WTC11 (cell line): ENCODE measurements at regions of chr11 and their contacts with region 1.

Region 1: GRCh38 chr11:69683764-69684333 is 8.7 kb upstream of the LTO1 start:
- DNase-seq: peak; percentile 75
- ATAC-seq: peak; percentile 69
- H3K4me3 Mint-ChIP-seq: no peak overlapping the region
- H3K27ac Mint-ChIP-seq: no peak overlapping the region
- H3K4me1 Mint-ChIP-seq: peaks cover 5% of the 10 kb centered on the region
- H3K27me3 Mint-ChIP-seq: peaks cover 10% of the 10 kb centered on the region
- CTCF ChIP-seq: peak; percentile 59

Region 2: GRCh38 chr11:69662017-69662698 is 21.7 kb before region 1 on chr11:
- CTCF ChIA-PET with region 1: interaction called, 34 read pairs
- POLR2A ChIA-PET with region 1: interaction called, 3 read pairs
- DNase-seq: peak; percentile 26
- ATAC-seq: peak; percentile 49
- H3K4me3 Mint-ChIP-seq: no peak overlapping the region
- H3K27ac Mint-ChIP-seq: peak overlapping the region; percentile 17; the same call in 1 of the 2 replicates
- H3K4me1 Mint-ChIP-seq: peaks cover 19% of the 10 kb centered on the region
- H3K27me3 Mint-ChIP-seq: no peaks in the 10 kb centered on the region
- CTCF ChIP-seq: no peak; the same call in 1 of the 2 replicates

Region 3: DNA sequence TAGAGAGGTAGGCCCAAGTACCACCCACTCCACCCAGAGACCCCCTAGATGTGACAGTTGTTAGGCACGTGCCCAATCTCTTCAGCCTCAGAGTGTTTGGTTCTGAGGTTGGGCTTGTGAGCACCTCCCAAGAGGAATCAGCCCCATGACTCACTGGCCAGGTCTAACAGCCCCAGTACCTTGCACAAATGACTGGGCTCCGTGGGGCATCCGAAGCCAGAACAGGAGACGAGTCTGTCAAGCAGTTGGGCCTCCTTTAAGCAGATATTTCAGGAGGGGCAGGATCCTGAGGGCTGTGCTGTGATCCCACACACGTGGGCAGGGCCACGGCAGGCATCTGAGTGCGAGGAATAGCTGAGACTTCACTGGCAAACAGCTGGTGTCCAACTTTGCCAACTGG is 49.1 kb after region 1 on chr11:
- CTCF ChIA-PET with region 1: no interaction called
- POLR2A ChIA-PET with region 1: no interaction called
- DNase-seq: no peak
- ATAC-seq: no peak
- H3K4me3 Mint-ChIP-seq: no peak overlapping the region
- H3K27ac Mint-ChIP-seq: no peak overlapping the region
- H3K4me1 Mint-ChIP-seq: peaks cover 10% of the 10 kb centered on the region
- H3K27me3 Mint-ChIP-seq: peaks cover 15% of the 10 kb centered on the region
- CTCF ChIP-seq: no peak